ENCODE measurements at regions of chr1 and their contacts with region 1.

Region 1: GRCh38 chr1:234571702-234572101 is 38.3 kb downstream of the IRF2BP2 start:
- DNase-seq: no peak
- ATAC-seq: no peak
- H3K4me3 ChIP-seq: no peak overlapping the region
- H3K27ac ChIP-seq: peak overlapping the region in 1 of 10 donors; percentile 51
- H3K4me1 ChIP-seq: peaks cover 0 to 38% (median 10%) of the 10 kb centered on the region in 9 donors
- H3K27me3 ChIP-seq: no peaks in the 10 kb centered on the region
- CTCF ChIP-seq: no peak

Region 2: DNA sequence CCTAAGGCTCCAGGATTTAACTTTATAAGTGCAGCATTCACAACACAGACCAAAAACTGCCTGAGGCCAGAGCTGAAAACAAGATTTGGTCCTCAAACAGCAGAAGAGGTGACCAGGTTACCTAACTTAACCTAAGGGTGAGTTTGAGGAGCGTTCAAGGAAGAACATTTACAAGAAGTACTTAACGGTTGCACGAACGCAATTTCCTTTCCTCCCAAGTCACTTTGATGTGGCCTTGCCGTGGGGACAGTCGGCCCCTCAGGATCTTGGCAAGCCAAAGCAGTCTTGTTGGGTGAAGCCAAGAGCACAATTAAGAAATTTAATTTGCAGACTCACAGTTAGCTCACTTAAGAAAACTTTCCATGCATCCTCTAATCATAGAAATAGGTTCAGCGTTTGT is 401.1 kb before region 1 on chr1:
- intact Hi-C with region 1: no loop called
- DNase-seq: no peak
- ATAC-seq: no peak
- H3K4me3 ChIP-seq: no peak overlapping the region
- H3K27ac ChIP-seq: no peak overlapping the region
- H3K4me1 ChIP-seq: no peaks in the 10 kb centered on the region
- H3K27me3 ChIP-seq: peaks cover 0 to 42% (median 3%) of the 10 kb centered on the region in 7 donors
- CTCF ChIP-seq: no peak

Region 3: GRCh38 chr1:234550341-234551031 is 21.2 kb before region 1 on chr1:
- intact Hi-C with region 1: loop called in 1 of 10 experiments (anchors 1 kb)
- DNase-seq: no peak
- ATAC-seq: peak in 2 of 8 donors; percentile 9 to 24
- H3K4me3 ChIP-seq: no peak overlapping the region
- H3K27ac ChIP-seq: peak overlapping the region in 1 of 10 donors; percentile 39
- H3K4me1 ChIP-seq: peaks cover 6 to 55% (median 33%) of the 10 kb centered on the region in 9 donors
- H3K27me3 ChIP-seq: no peaks in the 10 kb centered on the region
- CTCF ChIP-seq: no peak

Measured in heart right ventricle (tissue), 16 donors.